GM10248 (cell line): ENCODE measurements at regions of chr10 and their contacts with region 1.

Region 1: GRCh38 chr10:114304017-114304570 is 65.0 kb downstream of the VWA2 start:
- DNase-seq: peak; percentile 84
- CTCF ChIP-seq: peak; percentile 91

Region 2: DNA sequence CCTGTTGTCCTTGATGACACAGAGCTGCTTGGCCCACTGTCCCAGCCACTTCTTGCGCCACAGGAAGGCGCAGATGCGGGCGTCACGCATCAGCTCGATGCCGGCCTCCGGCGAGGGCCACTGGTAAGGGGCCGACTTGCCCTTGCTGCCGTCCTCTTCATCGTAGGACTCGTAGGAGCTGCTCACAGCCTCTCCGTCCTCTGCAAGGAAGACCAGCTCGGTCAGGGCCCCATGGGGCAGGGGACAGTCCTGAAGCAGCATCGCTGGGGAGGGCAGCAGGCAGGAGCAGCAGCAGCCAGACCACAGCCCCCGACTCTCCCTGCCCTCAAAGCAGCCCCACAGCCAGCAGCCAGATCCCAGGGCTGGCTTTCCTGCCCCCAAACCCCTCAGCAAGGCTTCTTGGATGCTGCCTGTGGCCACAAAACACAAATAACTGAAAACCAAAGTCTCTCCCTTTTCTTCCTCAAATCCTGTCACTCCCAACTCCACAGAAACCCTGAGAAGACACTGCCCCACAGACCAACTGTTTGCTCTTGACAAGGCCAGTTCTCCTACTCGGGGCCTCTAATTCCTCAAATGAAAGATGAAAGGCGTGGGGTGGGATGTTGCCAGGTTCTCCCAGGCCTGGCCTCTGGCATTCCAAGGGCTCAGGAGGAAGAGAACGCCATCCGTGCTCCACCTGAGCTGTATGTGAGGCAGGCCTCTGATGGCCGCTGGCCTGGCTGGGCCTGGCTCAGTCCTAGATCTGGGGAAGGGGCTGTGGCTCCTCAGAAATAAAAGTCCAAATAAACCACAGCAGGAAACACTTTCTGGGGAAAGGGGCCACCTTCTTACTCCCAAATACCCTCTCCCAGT is 11.7 kb after region 1 on chr10:
- CTCF ChIA-PET with region 1: interaction called, 15 read pairs
- POLR2A ChIA-PET with region 1: no interaction called
- DNase-seq: no peak
- CTCF ChIP-seq: no peak

Region 3: DNA sequence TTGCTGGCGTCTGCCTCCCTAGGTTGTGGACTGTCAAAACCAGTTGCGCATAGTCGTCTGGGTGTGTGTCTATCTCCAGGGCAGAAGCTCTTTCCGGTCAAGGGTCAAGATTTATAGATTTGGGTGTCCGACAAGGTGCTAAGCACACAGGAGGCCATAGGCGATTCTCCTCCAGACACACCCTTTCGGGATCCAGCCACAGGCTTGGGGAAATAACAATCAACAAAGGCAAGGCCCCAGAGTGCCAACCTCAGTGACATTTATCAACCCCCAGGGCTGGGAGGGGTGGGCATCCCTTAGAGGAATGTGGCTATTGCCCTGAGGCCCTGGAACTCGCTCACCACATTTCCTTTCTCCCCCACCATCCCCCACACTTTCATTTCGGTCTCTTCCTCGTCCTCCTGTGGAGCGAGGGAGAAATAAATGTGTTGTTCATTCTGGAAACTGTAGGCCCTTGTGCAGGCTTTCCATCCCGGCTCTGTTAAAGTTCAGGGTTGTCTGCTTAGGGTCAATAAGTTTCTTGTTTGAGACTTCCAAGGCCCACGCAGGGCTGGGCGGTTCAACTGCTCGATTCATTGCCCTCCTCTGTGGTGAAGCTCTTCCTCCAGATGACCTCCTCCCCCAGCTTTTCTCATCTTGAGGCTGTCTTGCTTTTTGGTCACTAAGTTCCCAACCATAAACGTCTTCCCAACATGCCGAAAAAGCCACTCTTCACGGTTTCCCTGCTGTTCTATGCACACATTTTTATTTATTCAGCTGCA is 42.4 kb after region 1 on chr10:
- CTCF ChIA-PET with region 1: interaction called, 11 read pairs
- POLR2A ChIA-PET with region 1: no interaction called
- DNase-seq: no peak
- CTCF ChIP-seq: no peak

Region 4: GRCh38 chr10:114403541-114404161 is 99.6 kb after region 1 on chr10:
- CTCF ChIA-PET with region 1: interaction called, 24 read pairs
- POLR2A ChIA-PET with region 1: no interaction called
- DNase-seq: peak; percentile 47
- CTCF ChIP-seq: peak; percentile 36

Region 5: GRCh38 chr10:114432566-114433093 is 128.5 kb after region 1 on chr10:
- CTCF ChIA-PET with region 1: interaction called, 25 read pairs
- POLR2A ChIA-PET with region 1: no interaction called
- DNase-seq: no peak
- CTCF ChIP-seq: no peak

Region 6: GRCh38 chr10:114470956-114471905 is 167.1 kb after region 1 on chr10:
- CTCF ChIA-PET with region 1: interaction called, 25 read pairs
- POLR2A ChIA-PET with region 1: no interaction called
- DNase-seq: peak; percentile 71
- CTCF ChIP-seq: peak; percentile 97

Region 7: DNA sequence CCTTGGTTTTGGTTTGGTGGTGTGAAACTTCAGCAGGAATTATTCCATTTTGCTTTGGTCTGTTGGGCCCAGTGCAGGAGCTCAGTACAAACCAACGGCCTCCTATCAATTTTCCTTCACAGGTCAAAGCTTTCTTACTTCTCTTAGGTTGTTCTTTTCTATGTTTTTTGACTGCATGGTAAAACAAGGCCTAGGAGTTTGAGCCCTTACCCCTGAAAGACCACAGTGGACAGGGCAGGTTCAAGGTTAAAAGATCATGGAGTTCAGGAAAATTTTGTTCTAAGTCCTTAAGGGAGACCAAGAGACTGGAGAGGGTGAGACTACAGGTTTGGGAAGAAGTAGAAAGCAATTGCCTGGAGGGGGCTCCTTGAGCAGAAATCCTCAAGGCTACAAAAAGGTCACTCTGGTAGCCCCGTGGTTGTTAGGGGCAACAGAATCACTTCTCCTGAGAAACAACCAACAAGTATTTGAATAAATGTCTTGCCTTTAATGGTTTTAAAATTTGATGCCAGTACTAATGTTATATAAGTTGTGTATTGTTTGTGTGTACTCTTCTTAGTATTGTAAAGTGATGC is 476.6 kb after region 1 on chr10:
- CTCF ChIA-PET with region 1: interaction called, 14 read pairs
- POLR2A ChIA-PET with region 1: no interaction called
- DNase-seq: no peak
- CTCF ChIP-seq: no peak